Endothelial cell of umbilical vein (primary cell): ENCODE measurements at regions of chr2 and their contacts with region 1.

Region 1: DNA sequence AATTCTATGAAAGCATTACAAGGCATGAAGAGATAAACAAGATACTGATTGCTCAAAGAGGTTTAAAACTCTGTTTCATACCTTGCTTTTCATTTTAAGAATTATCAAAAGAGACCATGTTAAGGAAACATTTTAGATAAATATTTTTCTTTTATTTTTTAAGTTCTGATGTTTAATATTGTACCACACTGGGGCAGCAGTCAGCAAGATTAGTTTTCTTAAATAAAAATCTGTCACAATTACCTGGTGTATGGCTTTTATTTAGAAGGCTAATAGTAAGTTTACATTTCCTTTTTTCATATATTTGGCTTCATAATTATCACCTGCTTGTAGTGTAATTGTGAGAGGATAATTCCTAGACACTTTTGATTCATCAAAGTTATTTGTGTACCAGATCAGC is 46.4 kb downstream of the ZNF804A start:
- DNase-seq: peak; percentile 23
- H3K4me3 ChIP-seq: no peak overlapping the region
- H3K27ac ChIP-seq: no peak overlapping the region
- H3K4me1 ChIP-seq: no peaks in the 10 kb centered on the region
- H3K27me3 ChIP-seq: no peaks in the 10 kb centered on the region
- CTCF ChIP-seq: no peak
- POLR2A ChIP-seq: no peak

Region 2: GRCh38 chr2:185279999-185280398 is 635.3 kb after region 1 on chr2:
- CTCF ChIA-PET with region 1: interaction called, 6 read pairs
- POLR2A ChIA-PET with region 1: no interaction called
- dilution Hi-C with region 1: no loop called
- intact Hi-C with region 1: loop called (anchors 1 kb)
- DNase-seq: peak; percentile 27
- H3K4me3 ChIP-seq: no peak overlapping the region
- H3K27ac ChIP-seq: no peak overlapping the region
- H3K4me1 ChIP-seq: no peaks in the 10 kb centered on the region
- H3K27me3 ChIP-seq: no peaks in the 10 kb centered on the region
- CTCF ChIP-seq: peak; percentile 26 to 30
- POLR2A ChIP-seq: no peak